CD8-positive, alpha-beta memory T cell (primary cell): ENCODE measurements at regions of chr9 and their contacts with region 1.

Region 1: GRCh38 chr9:35696525-35697215 is 6.9 kb upstream of the TPM2 start:
- DNase-seq: peak; percentile 36 to 71 (median 56)
- H3K4me3 ChIP-seq: no peak overlapping the region
- H3K4me3 Mint-ChIP-seq: peak overlapping the region in 2 of 7 donors; percentile 17 to 48
- H3K27ac ChIP-seq: no peak overlapping the region
- H3K27ac Mint-ChIP-seq: peak overlapping the region; percentile 47 to 94 (median 82)
- H3K4me1 ChIP-seq: no peaks in the 10 kb centered on the region
- H3K4me1 Mint-ChIP-seq: peaks cover 7 to 14% (median 13%) of the 10 kb centered on the region in 3 donors
- H3K27me3 ChIP-seq: no peaks in the 10 kb centered on the region
- H3K27me3 Mint-ChIP-seq: no peaks in the 10 kb centered on the region

Region 2: DNA sequence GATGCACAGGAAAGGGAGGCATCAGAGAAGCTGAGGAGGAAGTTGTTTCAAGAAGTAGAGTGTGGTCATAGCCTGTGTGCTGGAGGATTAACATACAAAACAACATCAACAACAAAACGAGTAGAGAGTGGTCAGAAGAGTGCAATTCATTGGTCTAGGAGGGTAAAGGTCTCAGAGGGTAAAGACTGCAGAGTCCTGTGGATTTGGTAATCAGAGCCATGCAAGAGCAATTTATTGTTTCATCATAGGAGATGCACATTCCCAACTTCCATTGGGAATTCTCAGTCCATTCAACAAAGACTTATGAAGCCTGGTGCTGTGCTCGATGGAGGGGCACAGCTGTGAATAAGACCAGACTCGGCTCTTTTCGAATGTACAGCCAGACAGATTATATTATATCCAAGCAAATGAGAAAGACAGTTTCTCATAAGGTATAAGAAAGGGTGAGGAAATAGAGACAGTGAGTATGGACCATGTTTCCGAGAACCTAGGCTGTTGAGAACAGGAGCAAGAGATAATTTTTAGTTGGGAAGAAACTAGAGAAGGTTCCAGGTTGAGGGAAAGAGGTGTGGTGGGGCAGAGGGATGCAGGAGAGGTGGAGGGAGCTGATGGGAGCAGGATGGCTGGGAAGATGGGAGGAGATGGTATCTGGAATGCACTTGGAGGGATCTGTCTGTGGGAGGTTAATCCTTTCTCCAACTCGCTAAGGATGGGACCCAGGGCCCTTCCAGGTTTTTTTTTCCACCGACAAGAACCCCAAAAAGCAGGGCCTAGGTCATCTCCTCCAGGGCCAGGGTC is 1312.1 kb before region 1 on chr9:
- CTCF ChIA-PET with region 1: no interaction called
- POLR2A ChIA-PET with region 1: no interaction called
- DNase-seq: no peak
- H3K4me3 ChIP-seq: no peak overlapping the region
- H3K4me3 Mint-ChIP-seq: no peak overlapping the region
- H3K27ac ChIP-seq: no peak overlapping the region
- H3K27ac Mint-ChIP-seq: no peak overlapping the region
- H3K4me1 ChIP-seq: peaks cover 16% of the 10 kb centered on the region
- H3K4me1 Mint-ChIP-seq: peaks cover 16 to 22% (median 20%) of the 10 kb centered on the region in 3 donors
- H3K27me3 ChIP-seq: no peaks in the 10 kb centered on the region
- H3K27me3 Mint-ChIP-seq: peaks cover 0 to 2% of the 10 kb centered on the region in 2 donors

Region 3: DNA sequence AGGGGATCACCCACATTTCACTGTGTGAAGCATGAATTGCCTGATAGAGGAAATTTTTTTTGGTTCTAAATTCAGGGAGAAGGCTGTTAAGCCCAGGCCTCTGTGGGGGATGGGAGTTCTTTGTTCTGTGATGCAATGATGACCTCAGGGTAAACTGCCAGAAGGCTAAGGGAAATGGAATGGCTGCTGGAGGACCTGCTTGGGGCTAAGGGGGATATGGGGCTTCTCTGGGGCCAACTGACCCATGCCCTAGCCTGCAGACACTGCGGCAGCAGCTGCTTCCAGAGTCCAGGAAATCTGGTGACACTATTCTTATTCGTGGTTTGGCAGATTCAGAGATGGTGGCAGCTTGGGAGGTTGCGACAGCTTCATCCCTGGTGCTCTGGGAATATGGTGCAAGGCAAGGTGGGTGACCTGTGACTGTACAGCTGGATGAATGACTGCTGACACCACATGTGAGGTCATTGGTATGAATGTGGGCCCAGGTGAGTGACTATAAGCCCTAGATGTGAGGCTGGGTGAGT is 654.5 kb before region 1 on chr9:
- CTCF ChIA-PET with region 1: no interaction called
- POLR2A ChIA-PET with region 1: no interaction called
- DNase-seq: no peak
- H3K4me3 ChIP-seq: no peak overlapping the region
- H3K4me3 Mint-ChIP-seq: no peak overlapping the region
- H3K27ac ChIP-seq: no peak overlapping the region
- H3K27ac Mint-ChIP-seq: peak overlapping the region in 2 of 8 donors; percentile 17 to 83
- H3K4me1 ChIP-seq: no peaks in the 10 kb centered on the region
- H3K4me1 Mint-ChIP-seq: peaks cover 0 to 1% (median 0%) of the 10 kb centered on the region in 3 donors
- H3K27me3 ChIP-seq: no peaks in the 10 kb centered on the region
- H3K27me3 Mint-ChIP-seq: no peaks in the 10 kb centered on the region

Region 4: GRCh38 chr9:35470894-35471293 is 225.8 kb before region 1 on chr9:
- CTCF ChIA-PET with region 1: no interaction called
- POLR2A ChIA-PET with region 1: no interaction called
- DNase-seq: no peak
- H3K4me3 ChIP-seq: no peak overlapping the region
- H3K4me3 Mint-ChIP-seq: no peak overlapping the region
- H3K27ac ChIP-seq: no peak overlapping the region
- H3K27ac Mint-ChIP-seq: no peak overlapping the region
- H3K4me1 ChIP-seq: no peaks in the 10 kb centered on the region
- H3K4me1 Mint-ChIP-seq: no peaks in the 10 kb centered on the region
- H3K27me3 ChIP-seq: no peaks in the 10 kb centered on the region
- H3K27me3 Mint-ChIP-seq: peaks cover 20 to 63% of the 10 kb centered on the region in 2 donors

Region 5: GRCh38 chr9:35518226-35518821 is 178.3 kb before region 1 on chr9:
- CTCF ChIA-PET with region 1: no interaction called
- POLR2A ChIA-PET with region 1: no interaction called
- DNase-seq: no peak
- H3K4me3 ChIP-seq: no peak overlapping the region
- H3K4me3 Mint-ChIP-seq: no peak overlapping the region
- H3K27ac ChIP-seq: no peak overlapping the region
- H3K27ac Mint-ChIP-seq: no peak overlapping the region
- H3K4me1 ChIP-seq: no peaks in the 10 kb centered on the region
- H3K4me1 Mint-ChIP-seq: no peaks in the 10 kb centered on the region
- H3K27me3 ChIP-seq: no peaks in the 10 kb centered on the region
- H3K27me3 Mint-ChIP-seq: peaks cover 0 to 3% of the 10 kb centered on the region in 2 donors

Region 6: GRCh38 chr9:35611230-35611797 is 85.4 kb before region 1 on chr9:
- CTCF ChIA-PET with region 1: interaction called, 54 read pairs
- POLR2A ChIA-PET with region 1: no interaction called
- DNase-seq: peak; percentile 37 to 68 (median 44)
- H3K4me3 ChIP-seq: no peak overlapping the region
- H3K4me3 Mint-ChIP-seq: peak overlapping the region in 2 of 7 donors; percentile 61 to 67
- H3K27ac ChIP-seq: no peak overlapping the region
- H3K27ac Mint-ChIP-seq: peak overlapping the region; percentile 3 to 84 (median 66)
- H3K4me1 ChIP-seq: peaks cover 11% of the 10 kb centered on the region
- H3K4me1 Mint-ChIP-seq: peaks cover 21 to 26% (median 26%) of the 10 kb centered on the region in 3 donors
- H3K27me3 ChIP-seq: no peaks in the 10 kb centered on the region
- H3K27me3 Mint-ChIP-seq: peaks cover 0 to 1% of the 10 kb centered on the region in 2 donors

Region 7: GRCh38 chr9:35657546-35658136 is 39.0 kb before region 1 on chr9 and contains the start of gene RMRP:
- CTCF ChIA-PET with region 1: interaction called, 82 read pairs
- POLR2A ChIA-PET with region 1: interaction called, 6 read pairs
- DNase-seq: peak; percentile 76 to 94 (median 91)
- H3K4me3 ChIP-seq: peak within 1 kb of the TSS; percentile 90
- H3K4me3 Mint-ChIP-seq: peak within 1 kb of the TSS; percentile 84 to 97 (median 92)
- H3K27ac ChIP-seq: peak within 1 kb of the TSS; percentile 99
- H3K27ac Mint-ChIP-seq: peak within 1 kb of the TSS; percentile 97 to 100 (median 99)
- H3K4me1 ChIP-seq: peaks cover 60% of the 10 kb centered on the region
- H3K4me1 Mint-ChIP-seq: peaks cover 61 to 79% (median 72%) of the 10 kb centered on the region in 3 donors
- H3K27me3 ChIP-seq: no peaks in the 10 kb centered on the region
- H3K27me3 Mint-ChIP-seq: peaks cover 4 to 9% of the 10 kb centered on the region in 2 donors
- total RNA-seq, gene RMRP: 7,718 to 11,549 TPM

Region 8: DNA sequence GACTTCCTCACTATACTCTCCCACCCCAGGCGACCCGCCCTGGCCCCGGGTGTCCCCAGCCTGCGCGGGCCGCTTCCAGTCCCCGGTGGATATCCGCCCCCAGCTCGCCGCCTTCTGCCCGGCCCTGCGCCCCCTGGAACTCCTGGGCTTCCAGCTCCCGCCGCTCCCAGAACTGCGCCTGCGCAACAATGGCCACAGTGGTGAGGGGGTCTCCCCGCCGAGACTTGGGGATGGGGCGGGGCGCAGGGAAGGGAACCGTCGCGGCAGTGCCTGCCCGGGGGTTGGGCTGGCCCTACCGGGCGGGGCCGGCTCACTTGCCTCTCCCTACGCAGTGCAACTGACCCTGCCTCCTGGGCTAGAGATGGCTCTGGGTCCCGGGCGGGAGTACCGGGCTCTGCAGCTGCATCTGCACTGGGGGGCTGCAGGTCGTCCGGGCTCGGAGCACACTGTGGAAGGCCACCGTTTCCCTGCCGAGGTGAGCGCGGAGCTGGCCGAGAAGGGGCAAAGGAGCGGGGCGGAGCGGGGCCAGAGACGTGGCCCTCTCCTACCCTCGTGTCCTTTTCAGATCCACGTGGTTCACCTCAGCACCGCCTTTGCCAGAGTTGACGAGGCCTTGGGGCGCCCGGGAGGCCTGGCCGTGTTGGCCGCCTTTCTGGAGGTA is 20.8 kb before region 1 on chr9:
- CTCF ChIA-PET with region 1: interaction called, 20 read pairs
- POLR2A ChIA-PET with region 1: no interaction called
- DNase-seq: peak in 4 of 5 donors; percentile 25 to 69 (median 33)
- H3K4me3 ChIP-seq: no peak overlapping the region
- H3K4me3 Mint-ChIP-seq: peak overlapping the region in 6 of 7 donors; percentile 71 to 87 (median 79)
- H3K27ac ChIP-seq: no peak overlapping the region
- H3K27ac Mint-ChIP-seq: peak overlapping the region in 1 of 8 donors; percentile 80
- H3K4me1 ChIP-seq: no peaks in the 10 kb centered on the region
- H3K4me1 Mint-ChIP-seq: peaks cover 11 to 20% (median 20%) of the 10 kb centered on the region in 3 donors
- H3K27me3 ChIP-seq: no peaks in the 10 kb centered on the region
- H3K27me3 Mint-ChIP-seq: peaks cover 11 to 13% of the 10 kb centered on the region in 2 donors

Region 9: DNA sequence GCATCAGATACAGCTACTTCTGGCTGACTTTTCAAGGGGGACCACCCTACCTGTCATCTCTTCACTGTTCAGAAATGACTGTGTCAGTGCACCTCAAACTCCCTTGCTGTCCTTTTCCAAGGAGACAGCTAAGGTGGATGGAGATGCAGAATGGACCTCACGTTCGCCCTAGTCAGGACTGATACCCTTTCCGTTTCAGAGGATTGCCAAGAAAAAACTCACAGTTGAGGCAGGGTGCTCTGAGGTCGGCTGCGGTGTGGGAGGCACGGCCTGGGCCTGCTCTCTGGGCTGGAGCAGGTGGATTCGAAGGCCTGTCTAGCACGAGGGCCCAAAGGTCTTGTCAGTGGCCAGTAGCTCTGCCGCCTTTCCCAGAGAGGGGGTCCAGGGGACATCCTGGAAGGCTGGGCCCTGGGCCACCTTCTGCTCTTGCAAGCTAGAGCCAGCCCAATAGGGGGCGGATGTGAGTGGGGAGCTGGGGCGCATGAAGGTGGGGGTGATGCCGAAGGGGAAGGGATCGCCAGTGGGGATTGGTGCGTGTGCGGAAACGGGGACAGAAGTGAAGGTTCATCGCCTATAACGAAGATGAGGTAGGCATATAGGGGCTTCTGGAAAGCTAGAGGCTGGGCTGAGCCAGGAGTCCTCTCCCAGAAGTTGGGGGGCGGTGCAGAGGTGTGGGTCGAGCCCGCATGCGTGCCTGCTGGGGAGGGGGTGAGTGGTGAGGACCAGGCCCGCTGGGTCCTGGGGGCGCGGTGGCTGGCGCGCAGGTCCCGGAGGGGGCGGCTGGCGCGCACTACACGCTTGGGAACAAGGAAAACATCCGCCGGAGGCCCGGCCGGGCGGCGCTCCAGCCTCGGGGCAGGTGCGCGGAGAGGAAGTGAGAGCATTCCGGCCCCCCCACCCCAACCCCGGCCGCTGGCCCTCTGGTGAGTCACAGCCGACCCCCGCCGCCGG is 59.9 kb after region 1 on chr9:
- CTCF ChIA-PET with region 1: interaction called, 22 read pairs
- POLR2A ChIA-PET with region 1: no interaction called
- DNase-seq: peak; percentile 65 to 86 (median 67)
- H3K4me3 ChIP-seq: peak overlapping the region; percentile 92
- H3K4me3 Mint-ChIP-seq: peak overlapping the region; percentile 92 to 100 (median 96)
- H3K27ac ChIP-seq: peak overlapping the region; percentile 76
- H3K27ac Mint-ChIP-seq: peak overlapping the region; percentile 92 to 99 (median 96)
- H3K4me1 ChIP-seq: peaks cover 25% of the 10 kb centered on the region
- H3K4me1 Mint-ChIP-seq: peaks cover 43 to 63% (median 51%) of the 10 kb centered on the region in 3 donors
- H3K27me3 ChIP-seq: no peaks in the 10 kb centered on the region
- H3K27me3 Mint-ChIP-seq: no peaks in the 10 kb centered on the region